Ovary (tissue), 10 donors: ENCODE measurements at regions of chr3 and their contacts with region 1.

Region 1: GRCh38 chr3:23916886-23917678 is at the starts of genes NKIRAS1 and RPL15:
- DNase-seq: peak; percentile 97 to 98 (median 98)
- H3K4me3 ChIP-seq: peak within 1 kb of the TSS; percentile 94
- H3K27ac ChIP-seq: peak within 1 kb of the TSS; percentile 78 to 88
- H3K4me1 ChIP-seq: peaks cover 4% of the 10 kb centered on the region
- H3K27me3 ChIP-seq: no peaks in the 10 kb centered on the region
- CTCF ChIP-seq: peak; percentile 58 to 95 (median 92)
- EP300 ChIP-seq: peak; percentile 3
- POLR2A ChIP-seq: peak; percentile 99
- total RNA-seq, gene NKIRAS1: 10.2 to 16.8 (median 13.4) TPM
- total RNA-seq, gene RPL15: 3,013 to 4,925 (median 3,735) TPM

Region 2: GRCh38 chr3:23945903-23946751 is 29.0 kb after region 1 on chr3:
- intact Hi-C with region 1: loop called in 3 of 4 experiments (anchors 2 kb)
- DNase-seq: peak; percentile 98 to 100 (median 99)
- H3K4me3 ChIP-seq: peak overlapping the region; percentile 69
- H3K27ac ChIP-seq: peak overlapping the region; percentile 64 to 98
- H3K4me1 ChIP-seq: peaks cover 8% of the 10 kb centered on the region
- H3K27me3 ChIP-seq: no peaks in the 10 kb centered on the region
- CTCF ChIP-seq: peak in 1 of 3 donors; percentile 9
- EP300 ChIP-seq: peak; percentile 55
- POLR2A ChIP-seq: peak; percentile 68

Region 3: GRCh38 chr3:24060055-24060454 is 143.0 kb after region 1 on chr3:
- intact Hi-C with region 1: no loop called
- DNase-seq: no peak
- H3K4me3 ChIP-seq: no peak overlapping the region
- H3K27ac ChIP-seq: no peak overlapping the region
- H3K4me1 ChIP-seq: no peaks in the 10 kb centered on the region
- H3K27me3 ChIP-seq: no peaks in the 10 kb centered on the region
- CTCF ChIP-seq: no peak
- EP300 ChIP-seq: no peak
- POLR2A ChIP-seq: no peak

Region 4: GRCh38 chr3:24389108-24390090 is 472.3 kb after region 1 on chr3:
- intact Hi-C with region 1: no loop called
- DNase-seq: no peak
- H3K4me3 ChIP-seq: no peak overlapping the region
- H3K27ac ChIP-seq: no peak overlapping the region
- H3K4me1 ChIP-seq: peaks cover 12% of the 10 kb centered on the region
- H3K27me3 ChIP-seq: no peaks in the 10 kb centered on the region
- CTCF ChIP-seq: no peak
- EP300 ChIP-seq: no peak
- POLR2A ChIP-seq: no peak